ENCODE measurements at regions of chr2 and their contacts with region 1.

Region 1: GRCh38 chr2:143110758-143111428 is 18.3 kb upstream of the ARHGAP15 start:
- DNase-seq: peak; percentile 37 to 67 (median 57)
- ATAC-seq: peak; percentile 41 to 57
- H3K4me3 ChIP-seq: no peak overlapping the region
- H3K27ac ChIP-seq: no peak overlapping the region
- H3K4me1 ChIP-seq: no peaks in the 10 kb centered on the region
- H3K27me3 ChIP-seq: no peaks in the 10 kb centered on the region

Region 2: GRCh38 chr2:143162123-143162837 is 51.4 kb after region 1 on chr2:
- intact Hi-C with region 1: no loop called
- DNase-seq: peak; percentile 11 to 56 (median 38)
- ATAC-seq: peak; percentile 72 to 78
- H3K4me3 ChIP-seq: no peak overlapping the region
- H3K27ac ChIP-seq: no peak overlapping the region
- H3K4me1 ChIP-seq: no peaks in the 10 kb centered on the region
- H3K27me3 ChIP-seq: no peaks in the 10 kb centered on the region

Region 3: DNA sequence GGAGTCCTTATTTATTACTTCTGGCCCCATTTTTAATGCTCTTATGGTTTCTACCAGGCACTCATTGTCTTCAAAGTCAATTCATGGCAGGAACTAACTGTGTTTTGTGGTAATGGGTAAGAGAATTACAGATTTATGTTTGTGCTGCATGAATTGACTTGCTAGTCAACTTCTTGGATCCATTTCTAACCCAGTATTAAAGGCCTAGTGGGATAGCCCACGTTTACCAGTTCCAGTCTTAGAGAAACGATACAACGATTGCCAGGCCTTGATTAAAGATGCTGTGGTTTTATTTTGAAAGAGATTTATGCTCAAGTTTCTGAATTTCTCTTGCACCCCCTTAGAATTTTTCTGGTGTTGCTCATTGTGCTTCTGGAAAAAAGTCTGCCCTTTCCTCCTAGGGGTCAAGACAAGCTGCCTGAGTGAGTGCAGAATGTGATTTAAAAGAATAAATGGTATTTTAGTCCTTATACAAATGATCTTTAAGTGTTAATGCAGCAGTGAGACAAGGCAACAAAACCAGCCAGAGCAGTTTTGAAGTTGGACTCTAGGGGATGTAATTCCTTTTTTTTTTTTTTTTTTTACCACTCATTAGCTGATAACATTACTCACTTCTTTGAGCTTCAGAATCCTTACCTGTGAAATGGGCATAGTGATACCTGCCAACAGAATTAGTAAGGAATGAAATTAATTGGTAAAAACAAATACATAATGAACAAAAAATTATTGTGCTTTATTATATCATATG is 119.8 kb after region 1 on chr2:
- intact Hi-C with region 1: loop called in 1 of 4 experiments (anchors 10 kb)
- DNase-seq: no peak
- ATAC-seq: no peak
- H3K4me3 ChIP-seq: no peak overlapping the region
- H3K27ac ChIP-seq: no peak overlapping the region
- H3K4me1 ChIP-seq: no peaks in the 10 kb centered on the region
- H3K27me3 ChIP-seq: no peaks in the 10 kb centered on the region

Region 4: GRCh38 chr2:143259368-143259958 is 148.6 kb after region 1 on chr2:
- intact Hi-C with region 1: loop called in 1 of 4 experiments (anchors 5 kb)
- DNase-seq: peak in 2 of 3 donors; percentile 49 to 78
- ATAC-seq: peak; percentile 58 to 71
- H3K4me3 ChIP-seq: peak overlapping the region; percentile 35
- H3K27ac ChIP-seq: no peak overlapping the region
- H3K4me1 ChIP-seq: no peaks in the 10 kb centered on the region
- H3K27me3 ChIP-seq: no peaks in the 10 kb centered on the region

Region 5: DNA sequence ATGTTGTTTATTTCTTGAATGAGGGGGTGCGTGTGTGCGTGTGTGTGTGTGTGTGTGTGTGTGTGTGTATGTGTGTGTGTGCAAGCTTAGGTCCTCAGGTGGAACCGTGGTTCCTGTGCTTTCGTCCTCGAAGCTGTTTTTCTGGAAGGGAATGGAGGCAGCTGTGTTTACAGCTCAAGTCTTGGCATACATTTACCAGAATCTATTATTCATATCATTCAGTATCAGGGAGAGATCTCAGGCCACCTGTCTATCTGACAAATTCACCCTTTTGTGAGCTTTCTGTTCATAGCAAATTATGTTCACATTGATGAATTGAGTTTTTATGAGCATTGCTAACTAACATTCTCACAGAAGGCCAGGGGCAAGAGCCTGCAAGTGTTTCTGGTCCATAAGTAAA is 568.7 kb after region 1 on chr2:
- intact Hi-C with region 1: no loop called
- DNase-seq: no peak
- ATAC-seq: no peak
- H3K4me3 ChIP-seq: no peak overlapping the region
- H3K27ac ChIP-seq: no peak overlapping the region
- H3K4me1 ChIP-seq: no peaks in the 10 kb centered on the region
- H3K27me3 ChIP-seq: no peaks in the 10 kb centered on the region

Measured in right cardiac atrium (tissue), 5 donors.